Head of caudate nucleus (tissue), 42 donors: ENCODE measurements at regions of chr22 and their contacts with region 1.

Region 1: GRCh38 chr22:26483439-26484359 is at the starts of genes HPS4 and SRRD:
- DNase-seq: peak; percentile 67 to 94 (median 88)

Region 2: GRCh38 chr22:26377170-26377830 is 106.4 kb before region 1 on chr22:
- intact Hi-C with region 1: no loop called
- DNase-seq: peak in 40 of 42 donors; percentile 6 to 87 (median 54)

Region 3: GRCh38 chr22:26511857-26512793 is 28.4 kb after region 1 on chr22 and contains the start of gene TFIP11:
- intact Hi-C with region 1: loop called (anchors 1 kb)
- DNase-seq: peak; percentile 88 to 99 (median 97)

Region 4: GRCh38 chr22:26658671-26659478 is 175.2 kb after region 1 on chr22:
- intact Hi-C with region 1: loop called (anchors 10 kb)
- DNase-seq: peak; percentile 58 to 95 (median 82)